Heart right ventricle (tissue), 16 donors: ENCODE measurements at regions of chr10 and their contacts with region 1.

Region 1: GRCh38 chr10:45505311-45505710 is 131.3 kb downstream of the ALOX5 start:
- DNase-seq: no peak
- ATAC-seq: no peak
- H3K4me3 ChIP-seq: no peak overlapping the region
- H3K27ac ChIP-seq: no peak overlapping the region
- H3K4me1 ChIP-seq: no peaks in the 10 kb centered on the region
- H3K27me3 ChIP-seq: no peaks in the 10 kb centered on the region
- CTCF ChIP-seq: no peak

Region 2: DNA sequence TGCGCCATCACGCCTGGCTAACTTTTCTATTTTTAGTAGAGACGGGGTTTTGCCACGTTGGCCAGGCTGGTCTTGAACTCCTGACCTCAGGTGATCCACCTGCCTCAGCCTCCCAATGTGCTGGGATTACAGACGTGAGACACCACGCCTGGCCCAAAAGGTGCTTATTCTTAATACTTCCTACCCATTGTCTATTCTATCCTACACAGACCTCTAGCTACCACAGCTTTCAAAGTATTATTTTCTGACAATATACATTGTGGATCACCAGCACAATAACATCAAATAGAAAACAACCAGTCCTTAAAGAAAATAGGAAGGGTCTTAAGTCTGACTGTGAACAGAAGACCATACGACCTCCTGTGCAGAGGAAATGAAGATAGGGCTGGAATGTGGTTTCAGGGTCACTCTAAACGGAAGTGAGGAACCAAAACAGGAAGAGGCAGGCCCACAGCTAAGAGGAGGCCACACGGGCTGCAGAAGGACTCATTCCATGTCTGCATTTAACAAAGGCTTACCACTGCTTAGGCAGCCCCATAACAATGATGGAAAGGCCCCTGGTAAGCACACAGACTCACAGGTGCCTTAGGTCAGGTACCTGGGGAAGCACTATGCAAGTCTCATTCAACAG is 52.1 kb after region 1 on chr10:
- intact Hi-C with region 1: loop called in 1 of 10 experiments (anchors 10 kb)
- DNase-seq: no peak
- ATAC-seq: peak in 4 of 8 donors; percentile 29 to 66 (median 46)
- H3K4me3 ChIP-seq: no peak overlapping the region
- H3K27ac ChIP-seq: peak overlapping the region in 2 of 10 donors; percentile 35 to 56
- H3K4me1 ChIP-seq: peaks cover 0 to 31% (median 12%) of the 10 kb centered on the region in 9 donors
- H3K27me3 ChIP-seq: no peaks in the 10 kb centered on the region
- CTCF ChIP-seq: no peak

Region 3: DNA sequence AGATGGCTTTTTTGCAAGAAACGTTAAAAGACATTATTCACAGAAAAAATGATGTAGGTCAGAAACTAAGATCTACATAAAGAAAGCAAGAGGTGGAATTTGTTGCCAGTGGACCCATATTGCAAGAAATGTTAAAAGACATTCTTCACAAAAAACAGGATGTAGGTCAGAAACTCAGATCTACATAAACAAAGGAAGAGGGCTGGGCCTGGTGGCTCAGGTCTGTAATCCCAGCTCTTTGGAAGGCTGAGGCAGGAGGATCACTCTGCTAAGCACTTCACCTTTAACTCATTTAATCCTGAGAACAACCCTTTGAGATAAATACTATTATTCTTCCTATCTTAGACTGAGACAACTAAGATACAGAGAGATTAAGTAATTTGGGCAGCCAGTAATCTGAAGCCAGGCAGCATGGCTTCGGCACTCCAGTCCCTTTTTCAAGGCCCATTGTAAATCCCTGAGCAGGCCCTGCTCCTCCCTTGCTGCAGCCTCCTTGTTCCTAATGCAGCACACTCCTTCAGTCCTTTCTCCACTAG is 155.6 kb after region 1 on chr10:
- intact Hi-C with region 1: no loop called
- DNase-seq: no peak
- ATAC-seq: no peak
- H3K4me3 ChIP-seq: no peak overlapping the region
- H3K27ac ChIP-seq: no peak overlapping the region
- H3K4me1 ChIP-seq: peaks cover 0 to 12% (median 3%) of the 10 kb centered on the region in 9 donors
- H3K27me3 ChIP-seq: no peaks in the 10 kb centered on the region
- CTCF ChIP-seq: no peak